ENCODE measurements at regions of chr1 and their contacts with region 1.

Region 1: GRCh38 chr1:116919802-116920201 is 10.1 kb downstream of the PTGFRN start:
- DNase-seq: no peak
- ATAC-seq: no peak

Region 2: DNA sequence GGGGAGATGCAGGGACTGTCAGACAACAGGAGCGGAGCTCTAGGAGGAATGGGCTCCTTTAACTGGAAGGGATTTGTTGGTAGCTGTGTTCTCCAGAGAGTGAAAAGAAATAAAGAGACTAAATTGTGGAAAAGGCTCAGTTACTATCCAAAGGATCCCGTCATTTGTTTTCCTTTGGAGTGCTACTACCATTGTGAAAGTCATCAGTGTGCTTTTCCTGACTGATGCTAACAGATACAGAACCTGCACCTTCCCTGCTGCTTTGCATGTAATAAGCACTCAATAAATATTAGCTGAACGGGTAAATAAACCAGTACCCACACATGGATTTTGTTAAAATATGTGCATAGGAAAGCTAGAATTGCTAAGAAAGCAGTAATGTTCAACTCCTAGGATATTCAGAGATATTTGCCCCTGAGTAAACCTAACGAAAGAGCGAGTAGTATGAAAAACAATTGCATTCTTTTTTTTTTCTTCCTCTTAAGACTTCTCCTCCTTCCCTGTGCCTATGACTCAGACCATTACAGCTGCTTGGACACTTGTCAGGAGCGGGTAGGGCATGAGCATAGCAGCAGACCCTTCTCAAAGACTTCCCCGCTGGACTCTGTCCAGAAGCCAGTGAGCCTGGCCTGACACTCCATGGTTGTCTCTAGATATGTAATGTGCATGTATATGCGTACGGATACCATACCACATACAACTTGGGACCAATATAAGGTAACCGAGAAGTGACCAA is 31.6 kb after region 1 on chr1:
- intact Hi-C with region 1: loop called in 1 of 2 experiments (anchors 5 kb)
- DNase-seq: peak; percentile 55
- ATAC-seq: peak; percentile 13 to 82

Region 3: DNA sequence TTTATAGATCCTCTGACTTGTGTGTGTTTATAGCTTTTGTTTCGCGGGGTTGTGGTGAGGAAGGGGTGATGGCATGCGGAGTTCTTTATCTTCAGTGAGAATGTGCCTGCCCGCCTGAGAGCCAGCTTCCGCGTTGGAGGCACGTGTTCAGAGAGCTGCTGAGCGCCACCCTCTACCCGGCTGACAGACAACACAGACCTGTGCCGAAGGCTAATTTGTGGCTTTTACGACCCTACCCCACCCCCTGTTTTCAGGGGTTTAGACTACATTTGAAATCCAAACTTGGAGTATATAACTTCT is 67.4 kb after region 1 on chr1:
- intact Hi-C with region 1: loop called in 1 of 2 experiments (anchors 5 kb)
- DNase-seq: peak; percentile 43
- ATAC-seq: peak; percentile 6 to 19

Measured in left cardiac atrium (tissue), 4 donors.